Posterior vena cava (tissue), 2 donors: ENCODE measurements at regions of chr7 and their contacts with region 1.

Region 1: DNA sequence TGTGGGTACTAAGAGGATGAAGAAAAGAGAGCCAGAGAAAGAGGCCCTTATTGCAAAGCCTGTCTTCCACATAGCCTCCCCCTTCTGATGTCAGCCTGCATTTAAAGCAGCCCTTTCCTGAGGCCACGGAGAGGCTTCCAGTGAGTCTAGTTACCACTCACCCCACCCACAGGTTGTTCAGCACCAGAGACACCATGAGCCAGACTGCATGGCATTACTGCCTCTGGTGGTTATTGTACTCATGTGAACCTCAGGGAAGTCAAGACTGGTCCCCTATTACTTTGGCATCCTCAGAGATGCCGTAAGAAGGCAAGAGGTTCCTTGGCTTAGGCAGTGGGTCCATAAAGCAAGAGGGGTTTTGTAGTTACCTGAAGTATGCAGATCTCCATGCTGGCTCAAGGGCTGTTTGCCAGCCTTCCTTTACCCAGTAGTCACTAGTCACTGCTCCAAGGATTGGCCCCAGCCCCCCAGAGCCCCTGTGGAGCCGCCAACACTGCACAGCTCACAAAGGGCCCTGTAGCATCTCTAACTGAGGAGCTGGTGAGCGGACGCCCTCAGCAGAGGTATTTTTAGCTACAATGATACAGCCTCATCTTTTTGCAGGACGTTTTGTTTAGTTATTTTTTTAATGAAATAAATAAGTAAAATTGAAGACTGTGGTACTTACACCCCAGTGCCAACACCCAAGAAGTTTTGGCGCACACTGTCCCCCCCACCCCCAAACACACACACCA is 20.7 kb downstream of the LRRC4 start:
- DNase-seq: no peak

Region 2: DNA sequence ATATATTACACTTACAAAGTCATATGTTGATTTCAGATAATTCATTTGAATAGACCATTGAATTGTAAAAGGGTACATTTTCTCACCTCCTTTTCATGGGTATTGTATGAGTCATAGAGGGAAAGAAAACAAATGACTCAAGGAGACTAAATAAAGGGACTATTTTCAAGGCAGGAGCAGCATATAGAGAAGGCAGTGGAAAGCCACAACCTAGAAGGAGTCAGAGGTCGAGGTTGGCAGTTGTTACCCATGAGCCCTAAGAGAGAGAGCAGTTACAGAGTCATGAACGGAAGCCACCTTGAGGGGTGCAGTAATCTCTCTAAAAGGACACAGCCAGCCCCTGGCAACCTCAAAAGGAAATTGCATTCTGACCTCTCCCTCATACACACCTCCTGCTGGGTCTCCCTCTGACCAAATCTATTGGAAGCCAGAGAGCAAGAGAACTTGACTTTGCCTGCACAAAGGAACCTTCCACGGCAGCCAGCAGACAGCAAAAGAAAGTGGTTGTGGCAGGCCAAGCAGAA is 895.8 kb before region 1 on chr7:
- intact Hi-C with region 1: loop called in 1 of 2 experiments (anchors 5 kb)
- DNase-seq: no peak

Region 3: DNA sequence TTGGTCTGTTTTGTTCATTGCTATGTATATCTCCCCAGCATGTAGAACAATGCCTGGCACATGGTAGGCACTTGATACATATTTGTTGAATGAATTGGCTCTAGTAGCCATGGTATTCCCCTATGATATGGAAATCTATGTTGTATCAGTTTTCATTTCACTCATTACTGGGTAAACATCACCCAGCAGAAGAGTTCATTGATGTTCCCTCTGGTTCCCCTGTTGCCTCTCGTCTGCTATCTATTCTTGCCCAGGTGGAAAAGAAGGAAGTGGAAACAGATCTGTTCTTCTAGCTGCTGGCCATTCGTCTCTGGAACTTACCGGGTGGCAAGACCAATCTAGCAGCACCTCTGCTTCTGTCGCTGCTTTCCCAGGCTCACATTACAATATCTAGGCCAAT is 50.8 kb before region 1 on chr7:
- intact Hi-C with region 1: no loop called
- DNase-seq: no peak

Region 4: GRCh38 chr7:128066861-128067260 is 56.3 kb after region 1 on chr7:
- intact Hi-C with region 1: no loop called
- DNase-seq: no peak

Region 5: GRCh38 chr7:128135515-128136214 is 125.1 kb after region 1 on chr7:
- intact Hi-C with region 1: no loop called
- DNase-seq: no peak